ENCODE measurements at regions of chr17 and their contacts with region 1.

Region 1: GRCh38 chr17:35587074-35587971 is at the start of gene AP2B1:
- DNase-seq: peak; percentile 89 to 100 (median 96)
- ATAC-seq: peak; percentile 98
- H3K4me3 ChIP-seq: peak within 1 kb of the TSS; percentile 99
- H3K4me3 Mint-ChIP-seq: peak within 1 kb of the TSS; percentile 96
- H3K27ac ChIP-seq: peak within 1 kb of the TSS; percentile 87 to 98
- H3K27ac Mint-ChIP-seq: peak within 1 kb of the TSS; percentile 97
- H3K4me1 ChIP-seq: peaks cover 27% of the 10 kb centered on the region
- H3K4me1 Mint-ChIP-seq: peaks cover 40% of the 10 kb centered on the region
- H3K27me3 ChIP-seq: no peaks in the 10 kb centered on the region
- H3K27me3 Mint-ChIP-seq: no peaks in the 10 kb centered on the region
- CTCF ChIP-seq: no peak
- total RNA-seq, gene AP2B1: 67.0 to 69.2 TPM

Region 2: GRCh38 chr17:34961093-34961911 is 626.0 kb before region 1 on chr17 and contains the starts of genes CCT6B and ZNF830:
- CTCF ChIA-PET with region 1: no interaction called
- POLR2A ChIA-PET with region 1: no interaction called
- intact Hi-C with region 1: loop called in 1 of 2 experiments (anchors 5 kb)
- DNase-seq: peak; percentile 81 to 97 (median 85)
- ATAC-seq: peak; percentile 89
- H3K4me3 ChIP-seq: peak within 1 kb of the TSS; percentile 87
- H3K4me3 Mint-ChIP-seq: peak within 1 kb of the TSS; percentile 100
- H3K27ac ChIP-seq: peak within 1 kb of the TSS; percentile 96
- H3K27ac Mint-ChIP-seq: peak within 1 kb of the TSS; percentile 95
- H3K4me1 ChIP-seq: peaks cover 18% of the 10 kb centered on the region
- H3K4me1 Mint-ChIP-seq: peaks cover 30% of the 10 kb centered on the region
- H3K27me3 ChIP-seq: no peaks in the 10 kb centered on the region
- H3K27me3 Mint-ChIP-seq: peaks cover 8% of the 10 kb centered on the region
- CTCF ChIP-seq: no peak
- total RNA-seq, gene CCT6B: 4.6 to 4.9 TPM
- total RNA-seq, gene ZNF830: 34.4 to 39.0 TPM

Region 3: GRCh38 chr17:34980681-34981537 is 606.4 kb before region 1 on chr17:
- CTCF ChIA-PET with region 1: no interaction called
- POLR2A ChIA-PET with region 1: interaction called, 3 read pairs
- intact Hi-C with region 1: loop called in 1 of 2 experiments (anchors 2 kb)
- DNase-seq: peak; percentile 38 to 91 (median 66)
- ATAC-seq: peak; percentile 80
- H3K4me3 ChIP-seq: peak overlapping the region; percentile 90
- H3K4me3 Mint-ChIP-seq: peak overlapping the region; percentile 94
- H3K27ac ChIP-seq: peak overlapping the region; percentile 92 to 97
- H3K27ac Mint-ChIP-seq: peak overlapping the region; percentile 88
- H3K4me1 ChIP-seq: peaks cover 26% of the 10 kb centered on the region
- H3K4me1 Mint-ChIP-seq: peaks cover 56% of the 10 kb centered on the region
- H3K27me3 ChIP-seq: no peaks in the 10 kb centered on the region
- H3K27me3 Mint-ChIP-seq: no peaks in the 10 kb centered on the region
- CTCF ChIP-seq: peak; percentile 56

Region 4: DNA sequence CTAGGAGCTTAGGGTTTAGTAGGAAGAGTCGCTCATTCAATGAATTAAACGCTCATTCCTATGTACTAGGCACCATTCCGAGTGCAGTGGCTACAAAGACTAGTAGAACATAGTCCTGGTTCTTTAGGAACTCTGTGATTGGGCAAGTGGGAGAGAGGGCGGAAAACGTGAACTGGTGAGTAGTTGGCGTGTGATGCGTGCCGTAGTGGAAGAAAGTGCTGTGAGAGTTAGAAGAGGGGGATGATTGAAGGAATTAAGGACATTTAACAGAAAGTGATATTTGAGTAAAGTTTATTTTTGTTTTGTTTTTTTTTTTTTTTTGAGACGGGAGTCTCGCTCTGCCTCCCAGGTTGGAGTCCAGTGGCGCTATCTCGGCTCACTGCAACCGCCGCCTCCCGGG is 18.8 kb before region 1 on chr17:
- CTCF ChIA-PET with region 1: no interaction called
- POLR2A ChIA-PET with region 1: interaction called, 10 read pairs
- intact Hi-C with region 1: no loop called
- DNase-seq: peak in 5 of 14 experiments; percentile 13 to 65 (median 39)
- ATAC-seq: peak; percentile 36
- H3K4me3 ChIP-seq: peak overlapping the region; percentile 95
- H3K4me3 Mint-ChIP-seq: peak overlapping the region; percentile 97
- H3K27ac ChIP-seq: peak overlapping the region in 1 of 2 donors; percentile 70
- H3K27ac Mint-ChIP-seq: peak overlapping the region; percentile 95
- H3K4me1 ChIP-seq: peaks cover 32% of the 10 kb centered on the region
- H3K4me1 Mint-ChIP-seq: peaks cover 36% of the 10 kb centered on the region
- H3K27me3 ChIP-seq: no peaks in the 10 kb centered on the region
- H3K27me3 Mint-ChIP-seq: peaks cover 5% of the 10 kb centered on the region
- CTCF ChIP-seq: no peak

Region 5: DNA sequence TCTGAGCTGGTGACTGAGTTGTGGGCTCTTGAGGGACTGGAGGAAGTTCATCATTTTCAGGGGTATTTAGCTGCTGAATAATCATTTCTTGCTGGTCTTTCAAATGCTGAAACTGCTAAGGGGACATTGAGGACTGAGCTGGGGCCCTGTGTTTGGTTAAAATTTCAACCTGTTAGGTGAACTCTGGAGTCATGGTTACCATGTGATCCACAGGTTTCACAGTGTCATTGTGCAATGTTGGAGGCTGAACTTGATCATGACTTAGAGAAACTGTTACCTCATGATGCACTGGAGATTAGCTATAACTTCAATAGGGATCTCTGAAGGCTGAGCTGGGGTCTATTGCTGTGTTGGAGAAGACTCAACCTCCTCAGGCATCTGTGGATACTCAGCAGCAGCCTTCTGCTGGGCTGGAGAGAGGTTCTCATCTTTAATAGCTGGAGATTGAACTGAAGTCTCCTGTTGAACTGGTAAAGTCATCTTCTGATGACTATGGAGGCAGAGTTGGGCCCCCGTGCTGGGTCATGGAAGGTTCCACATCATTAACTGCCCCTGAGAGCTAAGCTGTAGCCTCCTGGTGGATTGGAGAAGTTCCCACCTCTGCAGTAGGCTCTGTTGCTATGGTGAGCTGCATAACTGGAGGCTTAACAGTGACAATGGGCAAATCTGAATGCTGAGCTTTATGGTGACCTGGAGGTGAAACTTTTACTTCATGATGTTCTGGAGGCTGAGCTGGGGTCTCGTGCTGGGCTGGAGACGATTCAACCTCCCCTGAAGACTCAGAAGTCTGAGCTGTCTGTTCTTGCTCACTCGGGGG is 328.0 kb after region 1 on chr17:
- CTCF ChIA-PET with region 1: no interaction called
- POLR2A ChIA-PET with region 1: no interaction called
- intact Hi-C with region 1: no loop called
- DNase-seq: no peak
- ATAC-seq: no peak
- H3K4me3 ChIP-seq: no peak overlapping the region
- H3K4me3 Mint-ChIP-seq: no peak overlapping the region
- H3K27ac ChIP-seq: no peak overlapping the region
- H3K27ac Mint-ChIP-seq: no peak overlapping the region
- H3K4me1 ChIP-seq: peaks cover 19% of the 10 kb centered on the region
- H3K4me1 Mint-ChIP-seq: peaks cover 7% of the 10 kb centered on the region
- H3K27me3 ChIP-seq: no peaks in the 10 kb centered on the region
- H3K27me3 Mint-ChIP-seq: no peaks in the 10 kb centered on the region
- CTCF ChIP-seq: no peak

Measured in CD4-positive, alpha-beta T cell (primary cell).